ENCODE measurements at regions of chr7 and their contacts with region 1.

Region 1: GRCh38 chr7:151095123-151095797 is 9.0 kb downstream of the AGAP3 start:
- DNase-seq: no peak
- ATAC-seq: peak; percentile 39
- H3K4me3 Mint-ChIP-seq: no peak overlapping the region
- H3K27ac Mint-ChIP-seq: no peak overlapping the region
- H3K4me1 Mint-ChIP-seq: peaks cover 9% of the 10 kb centered on the region
- H3K27me3 Mint-ChIP-seq: no peaks in the 10 kb centered on the region

Region 2: DNA sequence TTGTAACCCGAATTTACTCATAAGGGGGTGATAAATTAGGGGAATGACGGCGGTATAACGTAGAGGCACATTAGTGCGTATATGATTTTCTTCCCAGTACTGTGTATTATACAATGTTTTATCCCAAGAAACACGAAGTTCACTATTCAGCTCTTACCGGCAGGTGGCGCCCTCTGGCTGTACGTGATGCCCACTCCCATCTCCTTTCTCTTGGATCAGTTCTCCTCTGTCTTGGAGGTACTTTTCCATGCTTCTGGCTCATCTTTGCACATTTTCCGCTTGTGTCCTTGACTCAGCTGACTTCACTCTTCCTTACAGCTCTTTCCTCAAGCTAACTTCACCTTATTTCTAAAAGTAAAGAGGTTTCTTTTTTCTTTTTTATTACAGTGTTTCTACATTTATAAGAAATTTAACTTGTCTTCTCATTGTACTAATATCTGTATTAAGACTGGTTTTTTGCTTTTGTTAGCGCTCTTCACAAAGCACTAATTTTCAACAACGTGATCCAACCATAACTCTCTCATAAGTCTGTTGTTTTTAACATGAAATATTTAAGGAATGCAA is 316.4 kb before region 1 on chr7:
- CTCF ChIA-PET with region 1: no interaction called
- POLR2A ChIA-PET with region 1: no interaction called
- intact Hi-C with region 1: loop called in 1 of 2 experiments (anchors 5 kb)
- DNase-seq: peak; percentile 88
- ATAC-seq: peak; percentile 75
- H3K4me3 Mint-ChIP-seq: no peak overlapping the region
- H3K27ac Mint-ChIP-seq: no peak overlapping the region
- H3K4me1 Mint-ChIP-seq: peaks cover 4% of the 10 kb centered on the region
- H3K27me3 Mint-ChIP-seq: peaks cover 3% of the 10 kb centered on the region

Region 3: GRCh38 chr7:151226875-151227782 is 131.9 kb after region 1 on chr7 and contains the start of gene ABCF2:
- CTCF ChIA-PET with region 1: no interaction called
- POLR2A ChIA-PET with region 1: no interaction called
- intact Hi-C with region 1: no loop called
- DNase-seq: peak; percentile 99
- ATAC-seq: peak; percentile 100
- H3K4me3 Mint-ChIP-seq: peak within 1 kb of the TSS; percentile 92
- H3K27ac Mint-ChIP-seq: peak within 1 kb of the TSS; percentile 92
- H3K4me1 Mint-ChIP-seq: peaks cover 40% of the 10 kb centered on the region
- H3K27me3 Mint-ChIP-seq: no peaks in the 10 kb centered on the region
- total RNA-seq, gene ABCF2: 48.4 to 49.0 TPM

Measured in activated CD4-positive, alpha-beta T cell treated with anti-CD3 and anti-CD28 coated beads for 36 hours (primary cell).